GM18951 (cell line): ENCODE measurements at regions of chr2 and their contacts with region 1.

Region 1: DNA sequence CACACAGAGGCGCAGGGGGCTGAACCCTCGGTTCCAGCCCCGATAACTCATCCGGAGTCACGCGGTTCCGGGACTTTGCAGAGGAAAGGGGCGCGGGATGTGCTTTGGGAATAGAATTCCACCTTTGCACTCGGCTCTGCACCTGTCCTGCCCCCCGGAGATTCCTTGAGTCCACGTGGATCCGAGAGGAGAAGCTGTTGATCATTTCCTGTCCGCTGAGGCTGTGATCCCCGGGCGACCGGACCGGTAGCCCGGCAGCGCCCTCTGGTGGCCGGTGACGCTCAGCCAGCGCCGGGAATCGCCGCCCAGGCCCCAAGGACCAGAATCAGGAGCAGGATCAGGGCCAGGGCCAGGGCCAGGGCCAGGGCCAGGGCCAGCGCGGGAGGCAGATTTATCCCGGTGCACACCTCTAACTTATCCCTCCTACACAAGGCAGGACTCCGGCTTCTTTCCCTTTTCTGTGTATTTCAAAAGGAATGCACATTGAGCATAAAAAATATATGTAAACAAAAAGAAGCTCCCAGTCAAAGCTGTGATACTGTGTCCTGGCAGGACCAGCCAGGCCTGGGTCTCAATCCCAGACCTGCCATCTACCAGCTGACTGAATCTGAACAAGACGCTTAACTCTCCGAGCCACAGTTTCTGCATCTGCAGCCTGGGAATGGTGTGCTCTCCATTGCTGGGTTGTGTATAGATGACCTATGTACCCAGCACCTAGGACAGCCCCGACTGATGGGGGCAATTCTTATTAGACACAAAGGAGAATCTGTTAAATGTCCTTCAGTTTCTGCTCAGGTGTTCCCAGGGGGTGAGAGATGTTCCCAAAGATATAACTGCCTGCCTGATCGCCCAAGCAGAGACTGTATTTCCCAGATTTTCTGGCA is 8.5 kb upstream of the SPATA3 start:
- POLR2A ChIP-seq: peak; percentile 40

Region 2: GRCh38 chr2:230902180-230902899 is 85.0 kb before region 1 on chr2:
- in situ Hi-C with region 1: loop called (anchors 5 kb)
- POLR2A ChIP-seq: no peak

Region 3: GRCh38 chr2:230949966-230950873 is 37.2 kb before region 1 on chr2:
- in situ Hi-C with region 1: loop called (anchors 5 kb)
- POLR2A ChIP-seq: no peak

Region 4: DNA sequence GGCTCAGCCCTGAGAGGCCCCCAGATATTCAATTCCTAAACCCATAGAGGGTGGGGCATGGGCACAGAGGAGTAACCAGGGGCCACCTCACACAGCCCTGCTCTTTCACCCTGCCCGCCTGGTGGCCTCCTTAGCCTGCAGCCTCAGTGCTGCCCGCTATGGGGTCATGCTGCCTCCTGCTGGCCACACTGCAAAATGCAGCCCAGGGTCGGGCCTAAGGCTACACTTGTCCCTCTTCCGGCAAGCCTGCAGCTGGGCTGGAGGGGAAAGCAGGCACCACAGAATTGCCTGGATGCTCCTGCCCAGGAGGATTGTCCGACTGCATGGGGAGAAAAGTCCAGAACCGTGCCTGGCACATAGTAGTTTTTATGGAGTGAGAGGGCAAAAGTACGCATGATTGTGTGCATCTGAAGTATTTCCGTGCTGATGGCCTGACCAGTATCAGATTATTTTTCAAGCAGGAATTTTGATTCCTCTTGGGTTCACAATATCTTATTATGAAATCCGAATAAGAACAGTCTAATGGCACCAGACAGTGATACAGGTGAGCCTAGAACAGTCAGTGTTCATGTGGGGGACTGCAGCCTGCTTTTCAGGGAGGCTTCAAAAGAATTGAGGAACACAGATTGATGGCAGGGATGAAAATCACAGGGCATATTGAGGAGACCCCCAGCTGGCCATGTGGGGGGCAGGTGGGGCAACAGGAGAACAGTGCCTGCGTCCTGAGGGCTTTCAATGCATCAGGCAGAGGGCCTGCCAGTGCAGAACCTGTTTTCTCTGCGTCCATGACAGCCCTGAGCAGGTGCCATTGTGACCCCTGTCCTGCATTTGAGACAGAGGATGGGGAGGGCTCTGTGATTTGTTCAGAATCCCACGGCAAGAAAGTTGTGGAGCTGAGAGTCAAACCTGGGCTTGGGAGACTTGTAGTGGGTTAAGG is 1340.0 kb after region 1 on chr2:
- in situ Hi-C with region 1: no loop called
- POLR2A ChIP-seq: no peak